KBM-7 (cell line): ENCODE measurements at regions of chr22 and their contacts with region 1.

Region 1: DNA sequence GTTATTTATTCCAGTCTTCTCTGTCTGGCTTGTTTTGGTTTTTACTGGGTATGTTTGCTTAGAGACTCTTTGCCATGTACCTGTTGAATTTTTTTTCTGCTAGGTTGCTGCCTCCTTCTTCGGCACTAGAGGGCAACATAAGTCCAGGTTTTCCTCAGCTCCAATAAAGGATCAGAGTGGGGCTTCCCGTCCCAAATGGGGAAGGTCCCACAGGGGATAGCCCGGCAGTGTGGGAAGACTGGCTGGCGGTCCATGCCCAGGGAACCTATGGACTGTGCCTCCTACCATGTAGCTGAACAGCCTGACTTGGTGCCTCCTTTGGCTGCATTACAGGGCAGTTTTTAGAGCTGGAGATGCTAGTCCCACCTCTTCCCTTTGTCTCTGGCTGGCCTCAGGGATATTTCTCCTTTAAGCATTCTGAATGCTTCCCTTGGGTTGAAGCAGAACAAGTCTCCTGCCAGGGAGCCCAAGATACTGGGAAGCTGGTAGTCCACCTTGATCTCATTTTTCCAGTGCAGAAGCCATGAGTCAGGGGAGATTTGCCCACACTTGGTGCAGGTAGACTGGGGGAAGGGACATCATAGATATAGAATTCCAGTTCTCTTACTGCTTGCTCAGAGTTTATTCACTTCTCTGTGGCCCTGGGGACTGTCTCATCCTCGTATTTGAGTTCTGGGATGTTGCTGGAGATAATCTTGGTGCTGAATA is 60.2 kb downstream of the BRD1 start:
- DNase-seq: peak; percentile 88

Region 2: GRCh38 chr22:50030297-50031188 is 263.0 kb after region 1 on chr22:
- in situ Hi-C with region 1: loop called (anchors 25 kb)
- DNase-seq: peak; percentile 74